Activated CD8-positive, alpha-beta memory T cell treated with anti-CD3 and anti-CD28 coated beads, Interleukin-2, amount 10 ng/mL, durations not matched to agents 7 days and 5 days (primary cell): ENCODE measurements at regions of chr12 and their contacts with region 1.

Region 1: DNA sequence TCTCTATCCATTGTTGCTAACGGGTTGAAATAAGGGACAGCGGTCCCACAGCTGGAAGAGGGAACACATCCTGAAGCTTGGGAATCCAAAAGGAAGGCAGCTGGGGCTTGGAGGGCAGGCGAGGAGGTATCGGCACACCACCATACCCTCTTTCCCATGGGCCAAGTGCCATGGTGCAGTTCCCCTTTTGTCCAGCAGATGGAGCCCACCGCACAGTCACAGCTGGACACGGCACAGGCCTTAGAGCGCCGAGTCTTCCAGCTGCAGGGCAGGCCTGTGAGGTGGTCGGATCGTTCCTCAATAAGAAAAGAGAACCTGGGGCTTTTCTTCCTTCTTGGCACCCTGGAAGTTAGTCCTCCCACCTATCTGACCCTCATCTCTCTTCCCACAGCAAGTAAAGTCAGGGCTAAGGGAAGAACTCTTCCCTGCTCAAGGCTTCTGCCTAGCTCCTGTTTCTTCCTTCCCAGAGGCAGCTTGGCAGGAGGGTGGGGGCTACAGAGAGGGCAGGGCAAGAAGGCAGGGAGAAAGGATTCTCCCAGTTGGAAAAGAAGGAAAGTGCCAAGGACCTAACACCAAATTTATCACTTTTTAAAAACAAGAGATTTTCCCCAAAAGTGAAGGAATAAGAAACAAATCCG is 8.6 kb downstream of the PPP1R1A start:
- DNase-seq: peak; percentile 86
- ATAC-seq: peak; percentile 96
- H3K4me3 Mint-ChIP-seq: no peak overlapping the region
- H3K27ac Mint-ChIP-seq: no peak overlapping the region
- H3K4me1 Mint-ChIP-seq: peaks cover 5% of the 10 kb centered on the region
- H3K27me3 Mint-ChIP-seq: peaks cover 13% of the 10 kb centered on the region

Region 2: DNA sequence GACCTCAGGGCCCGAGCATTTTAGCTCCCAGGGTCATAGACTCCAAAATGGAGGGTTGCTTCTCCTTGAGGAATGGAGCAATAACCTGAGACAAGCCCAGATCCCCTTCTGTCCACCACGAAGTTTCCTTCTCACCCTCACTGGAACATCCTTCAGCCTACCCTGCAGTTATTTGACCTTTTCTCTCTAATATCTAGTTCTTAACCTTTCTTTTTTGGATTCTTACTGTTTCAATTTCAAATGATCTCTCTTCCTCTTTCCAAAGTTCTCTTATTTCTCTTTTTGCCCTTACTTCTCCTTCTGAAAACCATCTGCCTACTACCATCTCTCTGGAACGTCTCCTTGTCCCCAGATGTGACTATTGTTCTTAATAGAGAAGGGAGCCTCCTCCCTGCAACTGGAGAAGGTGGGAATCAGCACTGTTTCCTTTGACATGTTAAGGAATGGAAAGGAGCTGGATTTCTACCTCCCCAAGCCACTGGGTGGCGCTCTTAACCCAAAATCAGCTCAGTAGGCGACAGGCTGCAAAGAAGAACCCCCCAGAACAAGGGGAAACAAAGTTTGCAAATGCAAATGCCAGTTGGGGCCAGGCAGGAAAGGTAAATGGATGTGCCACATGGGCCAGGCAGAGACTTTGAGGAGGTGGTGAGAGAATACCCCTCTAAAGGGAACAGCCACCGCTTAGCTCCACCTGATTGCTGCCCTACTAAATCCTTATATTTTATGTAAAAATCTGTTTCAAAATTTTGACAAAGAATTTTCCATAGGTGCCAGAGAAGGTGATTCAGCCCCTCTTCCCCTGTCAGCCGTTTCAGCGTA is 52.8 kb before region 1 on chr12:
- CTCF ChIA-PET with region 1: interaction called, 11 read pairs
- DNase-seq: peak; percentile 47
- ATAC-seq: no peak
- H3K4me3 Mint-ChIP-seq: no peak overlapping the region
- H3K27ac Mint-ChIP-seq: peak overlapping the region; percentile 47
- H3K4me1 Mint-ChIP-seq: peaks cover 7% of the 10 kb centered on the region
- H3K27me3 Mint-ChIP-seq: no peaks in the 10 kb centered on the region

Region 3: DNA sequence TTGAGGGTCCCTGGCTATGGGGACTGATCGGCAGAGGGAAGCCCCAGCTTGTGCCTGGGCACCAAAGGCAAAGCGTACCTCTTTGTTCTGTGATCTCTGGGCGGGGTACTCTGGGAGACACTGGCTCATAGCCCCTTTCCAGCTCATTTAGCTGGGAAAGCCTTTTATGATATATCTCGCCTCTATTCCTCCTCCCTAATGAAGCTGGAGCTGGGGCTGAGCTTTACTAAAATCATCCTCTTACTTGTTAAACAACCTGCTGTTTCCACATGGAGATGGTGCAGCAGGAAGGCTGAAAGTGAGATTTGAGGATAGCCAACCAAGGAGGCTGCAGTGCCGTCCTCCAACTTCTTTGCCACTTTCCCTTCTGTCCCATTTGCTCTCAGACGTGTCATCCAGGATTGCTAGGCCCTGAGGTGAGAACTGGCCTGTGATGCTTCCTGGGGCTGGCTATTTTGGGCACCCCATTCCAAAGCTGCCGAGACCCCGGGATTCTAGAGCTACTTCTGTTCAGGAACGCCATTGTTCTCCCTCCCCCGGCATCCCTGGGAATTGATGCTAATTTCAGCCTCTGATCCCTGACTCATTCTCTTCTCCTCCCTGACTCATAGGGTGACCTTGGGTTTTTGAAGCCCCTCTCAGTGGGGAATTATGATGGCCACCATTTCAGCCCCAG is 14.4 kb before region 1 on chr12:
- CTCF ChIA-PET with region 1: interaction called, 12 read pairs
- DNase-seq: no peak
- ATAC-seq: no peak
- H3K4me3 Mint-ChIP-seq: no peak overlapping the region
- H3K27ac Mint-ChIP-seq: no peak overlapping the region
- H3K4me1 Mint-ChIP-seq: peaks cover 16% of the 10 kb centered on the region
- H3K27me3 Mint-ChIP-seq: no peaks in the 10 kb centered on the region

Region 4: GRCh38 chr12:54596526-54596946 is 16.7 kb after region 1 on chr12:
- CTCF ChIA-PET with region 1: interaction called, 29 read pairs
- DNase-seq: peak; percentile 63
- ATAC-seq: peak; percentile 64
- H3K4me3 Mint-ChIP-seq: no peak overlapping the region
- H3K27ac Mint-ChIP-seq: no peak overlapping the region
- H3K4me1 Mint-ChIP-seq: no peaks in the 10 kb centered on the region
- H3K27me3 Mint-ChIP-seq: peaks cover 25% of the 10 kb centered on the region

Region 5: GRCh38 chr12:54601841-54602240 is 22.0 kb after region 1 on chr12:
- CTCF ChIA-PET with region 1: interaction called, 29 read pairs
- DNase-seq: no peak
- ATAC-seq: no peak
- H3K4me3 Mint-ChIP-seq: no peak overlapping the region
- H3K27ac Mint-ChIP-seq: no peak overlapping the region
- H3K4me1 Mint-ChIP-seq: peaks cover 4% of the 10 kb centered on the region
- H3K27me3 Mint-ChIP-seq: peaks cover 13% of the 10 kb centered on the region

Region 6: DNA sequence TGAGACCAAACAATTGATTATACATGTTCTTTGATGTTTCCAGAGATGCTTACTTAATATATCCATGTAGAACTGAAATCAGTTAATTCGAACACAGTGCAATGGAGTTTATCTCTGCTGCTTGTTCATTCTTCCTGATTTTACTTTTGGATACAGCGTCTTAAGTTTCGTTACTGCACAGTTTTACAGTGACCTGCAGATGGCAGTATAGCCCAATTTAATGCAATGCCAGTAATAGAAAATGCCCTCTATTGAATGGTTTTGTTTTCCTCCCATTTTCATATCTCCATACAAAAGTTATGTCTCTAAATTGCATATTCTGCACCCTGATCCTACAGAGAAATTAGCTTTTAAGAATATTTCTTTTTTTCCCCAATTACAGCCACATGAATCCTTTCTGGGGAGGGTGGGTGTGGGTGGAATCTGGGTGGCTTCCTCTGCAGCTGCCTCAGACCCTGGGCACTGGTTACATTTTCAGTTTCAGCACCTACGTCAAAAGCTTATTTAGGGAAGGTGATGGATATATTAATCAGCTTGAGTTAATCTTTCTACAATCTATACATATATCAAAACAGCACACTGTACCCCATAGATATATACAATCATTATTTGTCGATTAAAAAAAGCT is 169.5 kb after region 1 on chr12:
- CTCF ChIA-PET with region 1: no interaction called
- DNase-seq: peak; percentile 53
- ATAC-seq: peak; percentile 96
- H3K4me3 Mint-ChIP-seq: peak overlapping the region; percentile 39
- H3K27ac Mint-ChIP-seq: peak overlapping the region; percentile 67
- H3K4me1 Mint-ChIP-seq: peaks cover 21% of the 10 kb centered on the region
- H3K27me3 Mint-ChIP-seq: peaks cover 5% of the 10 kb centered on the region